Dendritic cell treated with granulocyte-macrophage colony-stimulating factor and Interleukin-4, amounts not matched to agents 40 ng/mL and 50 ng/mL, for 4 days (primary cell): ENCODE measurements at regions of chr1 and their contacts with region 1.

Region 1: DNA sequence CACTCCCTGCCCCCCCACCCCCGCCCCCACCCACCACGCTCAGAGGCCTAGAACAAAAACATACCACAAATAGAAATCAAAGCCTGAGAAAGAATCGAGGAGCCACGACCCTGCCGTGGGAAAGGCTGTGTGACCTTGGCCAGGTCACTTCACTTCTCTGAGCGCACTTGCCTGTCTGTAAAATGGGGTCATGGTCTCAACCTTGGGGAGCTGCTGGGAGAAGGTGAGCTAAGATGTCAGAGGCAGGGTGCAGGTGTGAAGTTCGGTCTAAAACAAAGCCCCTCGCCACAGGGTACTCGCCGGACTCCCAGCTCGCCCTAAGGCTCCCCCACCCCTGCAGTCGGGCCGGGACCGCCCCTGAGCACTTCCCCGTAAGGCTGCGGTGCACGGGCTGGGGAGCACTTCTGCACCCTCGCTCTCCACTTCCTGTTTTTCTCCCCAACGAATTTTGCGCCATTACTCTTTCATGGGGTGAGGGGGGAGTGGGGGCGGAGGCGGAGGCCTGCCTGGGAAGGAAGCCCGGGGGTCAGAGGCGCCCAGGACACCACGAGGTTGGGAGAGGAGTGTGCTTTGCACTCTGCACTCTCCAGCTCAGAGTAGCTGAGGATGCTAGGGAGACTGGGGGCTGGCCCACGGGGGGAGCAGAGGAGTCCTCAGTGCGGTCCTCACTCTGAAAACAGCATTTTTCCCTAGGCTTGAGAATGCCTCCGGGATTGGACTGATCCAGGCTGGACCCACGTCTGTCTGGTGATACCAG is 21.9 kb upstream of the PIK3CD start:
- H3K4me3 Mint-ChIP-seq: peak overlapping the region; percentile 44
- H3K27ac Mint-ChIP-seq: peak overlapping the region; percentile 59
- H3K4me1 Mint-ChIP-seq: peaks cover 71% of the 10 kb centered on the region
- H3K27me3 Mint-ChIP-seq: peaks cover 14% of the 10 kb centered on the region

Region 2: GRCh38 chr1:9643351-9644256 is 14.0 kb after region 1 on chr1:
- intact Hi-C with region 1: loop called (anchors 1 kb)
- H3K4me3 Mint-ChIP-seq: peak overlapping the region; percentile 47
- H3K27ac Mint-ChIP-seq: peak overlapping the region; percentile 87
- H3K4me1 Mint-ChIP-seq: peaks cover 66% of the 10 kb centered on the region
- H3K27me3 Mint-ChIP-seq: no peaks in the 10 kb centered on the region

Region 3: GRCh38 chr1:9651565-9652378 is 22.1 kb after region 1 on chr1 and contains the start of gene PIK3CD:
- intact Hi-C with region 1: loop called (anchors 2 kb)
- H3K4me3 Mint-ChIP-seq: peak within 1 kb of the TSS; percentile 92
- H3K27ac Mint-ChIP-seq: peak within 1 kb of the TSS; percentile 92
- H3K4me1 Mint-ChIP-seq: peaks cover 66% of the 10 kb centered on the region
- H3K27me3 Mint-ChIP-seq: no peaks in the 10 kb centered on the region

Region 4: GRCh38 chr1:9670085-9670484 is 40.5 kb after region 1 on chr1:
- intact Hi-C with region 1: loop called (anchors 1 kb)
- H3K4me3 Mint-ChIP-seq: peak overlapping the region; percentile 51
- H3K27ac Mint-ChIP-seq: peak overlapping the region; percentile 73
- H3K4me1 Mint-ChIP-seq: peaks cover 53% of the 10 kb centered on the region
- H3K27me3 Mint-ChIP-seq: no peaks in the 10 kb centered on the region

Region 5: DNA sequence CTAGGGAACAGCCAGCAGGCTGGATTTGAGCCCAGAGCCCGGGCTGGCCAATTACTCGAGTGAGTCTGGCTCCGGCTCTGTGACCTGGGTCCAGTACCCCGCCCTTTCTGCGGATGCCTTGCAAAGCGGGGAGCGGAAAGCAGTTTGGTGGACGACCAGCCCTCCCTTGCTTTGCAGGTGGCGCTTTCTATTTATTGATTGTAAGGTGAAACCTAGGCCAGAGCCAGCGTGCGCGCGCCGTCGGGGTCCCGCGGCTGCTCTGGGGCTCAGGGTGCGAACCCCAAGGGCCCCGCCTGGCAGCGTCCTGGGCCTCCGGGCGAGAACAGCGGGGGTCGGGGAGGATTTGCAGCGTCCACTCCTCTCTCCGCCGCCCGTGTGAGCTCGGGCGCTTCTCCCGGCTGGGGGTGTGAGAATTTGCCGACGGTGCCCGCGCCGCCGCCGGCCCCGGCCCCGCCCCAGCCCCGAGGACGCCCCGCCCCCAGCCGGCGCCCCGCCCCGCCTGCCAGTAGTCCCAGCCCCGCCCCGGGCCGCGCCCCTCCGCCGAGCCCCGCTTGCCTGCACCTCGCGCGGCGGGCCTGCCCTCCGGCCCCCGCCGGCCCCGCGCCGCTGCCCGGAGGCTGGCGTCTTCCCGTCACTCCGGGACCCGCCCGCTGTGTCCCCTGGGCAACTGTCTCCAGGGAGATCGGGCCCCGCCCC is 59.5 kb after region 1 on chr1:
- intact Hi-C with region 1: loop called (anchors 5 kb)
- H3K4me3 Mint-ChIP-seq: peak overlapping the region; percentile 83
- H3K27ac Mint-ChIP-seq: no peak overlapping the region
- H3K4me1 Mint-ChIP-seq: peaks cover 78% of the 10 kb centered on the region
- H3K27me3 Mint-ChIP-seq: no peaks in the 10 kb centered on the region

Region 6: DNA sequence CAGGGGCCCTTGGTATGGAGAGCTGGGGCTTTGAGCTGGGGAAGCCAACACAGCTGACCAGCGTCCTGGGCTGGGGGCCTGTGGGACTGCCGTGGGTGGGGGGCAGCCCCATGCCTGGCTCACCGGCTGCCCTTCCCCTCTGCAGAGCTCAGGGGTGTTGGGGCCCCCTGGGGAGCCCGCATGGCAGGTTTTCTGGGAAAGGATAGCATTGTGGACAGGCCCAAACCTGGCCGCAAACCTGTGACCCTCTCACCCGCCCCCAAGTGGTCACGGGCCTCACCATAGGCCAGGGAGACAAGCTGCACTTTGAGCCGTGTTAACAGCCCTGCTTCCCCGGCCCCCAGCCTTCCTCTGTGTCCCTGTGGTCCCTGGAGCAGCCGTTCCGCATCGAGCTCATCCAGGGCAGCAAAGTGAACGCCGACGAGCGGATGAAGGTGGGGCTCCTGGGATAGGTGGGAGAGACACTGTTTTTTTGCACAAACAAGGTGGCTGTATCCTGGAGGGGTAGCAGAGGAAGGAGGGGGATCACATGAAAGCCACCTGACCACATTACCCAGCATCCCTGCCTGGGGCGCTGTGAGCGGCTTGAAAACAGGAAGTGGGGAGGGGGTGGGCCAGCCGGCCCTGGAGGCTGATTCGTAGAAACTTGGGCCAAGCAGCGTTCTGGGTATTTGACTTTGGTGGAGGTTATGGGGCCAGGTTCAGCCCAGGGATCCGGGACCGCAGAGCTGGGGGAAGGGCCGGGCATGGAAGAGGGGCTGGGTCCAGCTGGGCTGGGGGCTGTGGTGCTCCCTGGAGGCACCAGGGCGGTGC is 87.8 kb after region 1 on chr1:
- intact Hi-C with region 1: loop called (anchors 5 kb)
- H3K4me3 Mint-ChIP-seq: peak overlapping the region; percentile 76
- H3K27ac Mint-ChIP-seq: peak overlapping the region; percentile 78
- H3K4me1 Mint-ChIP-seq: peaks cover 66% of the 10 kb centered on the region
- H3K27me3 Mint-ChIP-seq: no peaks in the 10 kb centered on the region

Region 7: GRCh38 chr1:9867408-9868243 is 238.0 kb after region 1 on chr1:
- intact Hi-C with region 1: loop called (anchors 1 kb)
- H3K4me3 Mint-ChIP-seq: no peak overlapping the region
- H3K27ac Mint-ChIP-seq: no peak overlapping the region
- H3K4me1 Mint-ChIP-seq: peaks cover 17% of the 10 kb centered on the region
- H3K27me3 Mint-ChIP-seq: no peaks in the 10 kb centered on the region